HepG2 (cell line): ENCODE measurements at regions of chr5 and their contacts with region 1.

Region 1: GRCh38 chr5:169583424-169584204 is at the start of gene SPDL1:
- DNase-seq: peak; percentile 93
- ATAC-seq: peak; percentile 99
- H3K4me3 ChIP-seq: peak within 1 kb of the TSS; percentile 84 to 93 (median 90)
- H3K27ac ChIP-seq: peak within 1 kb of the TSS; percentile 78
- H3K4me1 ChIP-seq: peaks cover 12% of the 10 kb centered on the region
- H3K27me3 ChIP-seq: no peaks in the 10 kb centered on the region; a peak in 1 of 5 replicates
- CTCF ChIP-seq: no peak
- EP300 ChIP-seq: no peak
- POLR2A ChIP-seq: peak; percentile 76 to 82
- RAD21 ChIP-seq: 0 out of 2 replicates have a peak, but pooled peaks have one; percentile 9
- total RNA-seq, gene SPDL1: 36.6 and 61.4 TPM in 2 replicates

Region 2: DNA sequence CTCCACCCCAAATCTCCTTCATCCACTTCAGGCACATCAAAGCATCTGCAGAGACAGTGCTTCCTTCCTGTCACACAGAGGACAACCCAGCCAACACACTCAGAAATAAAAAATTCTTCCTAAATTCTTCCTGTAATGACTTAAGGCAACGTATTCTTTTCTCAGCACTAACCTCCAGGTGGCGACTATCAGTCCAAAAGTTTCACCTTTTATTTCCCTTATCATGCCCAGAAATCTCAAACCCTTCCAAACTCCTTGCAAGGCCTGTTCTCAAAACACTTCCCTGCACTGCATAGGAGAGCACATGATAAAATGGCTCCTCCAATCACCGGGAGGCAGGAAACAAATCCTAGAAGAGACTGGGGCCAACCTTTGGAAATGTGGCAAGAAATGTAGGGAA is 317.7 kb before region 1 on chr5:
- CTCF ChIA-PET with region 1: no interaction called
- POLR2A ChIA-PET with region 1: no interaction called
- in situ Hi-C with region 1: no loop called
- intact Hi-C with region 1: loop called (anchors 5 kb)
- DNase-seq: no peak
- ATAC-seq: no peak
- H3K4me3 ChIP-seq: no peak overlapping the region
- H3K27ac ChIP-seq: no peak overlapping the region
- H3K4me1 ChIP-seq: no peaks in the 10 kb centered on the region
- H3K27me3 ChIP-seq: 0 out of 5 replicates have a peak, but pooled peaks cover 0 to 3% of the 10 kb centered on the region in 2 experiments
- CTCF ChIP-seq: no peak
- EP300 ChIP-seq: no peak
- POLR2A ChIP-seq: no peak
- RAD21 ChIP-seq: no peak

Region 3: GRCh38 chr5:169494941-169495548 is 88.6 kb before region 1 on chr5:
- CTCF ChIA-PET with region 1: no interaction called
- POLR2A ChIA-PET with region 1: no interaction called
- in situ Hi-C with region 1: no loop called
- intact Hi-C with region 1: no loop called
- DNase-seq: no peak
- ATAC-seq: no peak
- H3K4me3 ChIP-seq: no peak overlapping the region
- H3K27ac ChIP-seq: no peak overlapping the region
- H3K4me1 ChIP-seq: no peaks in the 10 kb centered on the region
- H3K27me3 ChIP-seq: no peaks in the 10 kb centered on the region
- CTCF ChIP-seq: no peak
- EP300 ChIP-seq: no peak
- POLR2A ChIP-seq: no peak
- RAD21 ChIP-seq: no peak